ENCODE measurements at regions of chr1 and their contacts with region 1.

Region 1: GRCh38 chr1:117534995-117535467 is 70.8 kb upstream of the TENT5C start:
- DNase-seq: peak; percentile 47
- ATAC-seq: peak; percentile 86
- H3K4me3 Mint-ChIP-seq: no peak overlapping the region
- H3K27ac Mint-ChIP-seq: no peak overlapping the region
- H3K4me1 Mint-ChIP-seq: peaks cover under 1% of the 10 kb centered on the region
- H3K27me3 Mint-ChIP-seq: no peaks in the 10 kb centered on the region

Region 2: GRCh38 chr1:117436513-117436912 is 98.5 kb before region 1 on chr1:
- CTCF ChIA-PET with region 1: no interaction called
- POLR2A ChIA-PET with region 1: no interaction called
- DNase-seq: no peak
- ATAC-seq: no peak
- H3K4me3 Mint-ChIP-seq: no peak overlapping the region
- H3K27ac Mint-ChIP-seq: no peak overlapping the region
- H3K4me1 Mint-ChIP-seq: no peaks in the 10 kb centered on the region
- H3K27me3 Mint-ChIP-seq: no peaks in the 10 kb centered on the region

Region 3: GRCh38 chr1:117501281-117501680 is 33.8 kb before region 1 on chr1:
- CTCF ChIA-PET with region 1: interaction called, 29 read pairs
- POLR2A ChIA-PET with region 1: no interaction called
- DNase-seq: no peak
- ATAC-seq: no peak
- H3K4me3 Mint-ChIP-seq: no peak overlapping the region
- H3K27ac Mint-ChIP-seq: no peak overlapping the region
- H3K4me1 Mint-ChIP-seq: no peaks in the 10 kb centered on the region
- H3K27me3 Mint-ChIP-seq: no peaks in the 10 kb centered on the region

Region 4: GRCh38 chr1:117582451-117582850 is 47.4 kb after region 1 on chr1:
- CTCF ChIA-PET with region 1: interaction called, 19 read pairs
- POLR2A ChIA-PET with region 1: no interaction called
- DNase-seq: no peak
- ATAC-seq: no peak
- H3K4me3 Mint-ChIP-seq: no peak overlapping the region
- H3K27ac Mint-ChIP-seq: no peak overlapping the region
- H3K4me1 Mint-ChIP-seq: no peaks in the 10 kb centered on the region
- H3K27me3 Mint-ChIP-seq: no peaks in the 10 kb centered on the region

Region 5: DNA sequence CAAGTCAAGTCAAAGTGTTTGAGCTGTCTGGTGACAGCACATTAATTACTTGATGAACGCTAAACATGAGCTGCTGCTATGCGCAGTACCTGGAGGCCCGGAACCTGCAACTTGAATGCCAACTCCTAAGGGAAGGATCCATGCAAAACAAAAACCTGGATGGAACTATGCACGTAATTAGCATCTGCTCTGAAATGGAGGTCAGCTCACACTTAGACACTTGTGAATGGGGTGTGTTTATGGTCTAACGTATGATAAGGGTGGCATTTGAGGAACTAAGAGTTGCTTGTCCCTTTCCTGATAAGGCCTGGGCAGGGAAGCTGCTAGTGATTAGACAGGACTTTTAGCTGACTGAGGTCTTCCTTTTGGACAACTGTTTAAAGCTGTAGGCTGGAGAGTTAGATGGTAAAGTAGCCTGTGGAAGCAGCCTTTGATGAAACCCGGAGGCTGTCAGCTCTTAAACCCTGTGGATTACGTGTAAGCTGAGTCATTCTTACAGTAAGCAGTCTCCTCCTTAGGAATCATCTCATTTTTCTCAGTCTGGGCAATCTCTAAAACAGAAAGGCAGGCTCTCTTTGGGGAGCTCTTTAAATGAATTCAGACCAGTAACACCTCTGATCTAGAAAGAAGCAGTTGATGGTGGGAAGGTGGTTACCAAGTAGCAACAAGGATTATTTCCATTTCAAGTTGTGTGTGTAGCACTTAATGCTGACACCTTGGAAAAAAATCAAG is 77.7 kb after region 1 on chr1:
- CTCF ChIA-PET with region 1: interaction called, 29 read pairs
- POLR2A ChIA-PET with region 1: no interaction called
- DNase-seq: no peak
- ATAC-seq: peak; percentile 7
- H3K4me3 Mint-ChIP-seq: no peak overlapping the region
- H3K27ac Mint-ChIP-seq: no peak overlapping the region
- H3K4me1 Mint-ChIP-seq: peaks cover 86% of the 10 kb centered on the region
- H3K27me3 Mint-ChIP-seq: no peaks in the 10 kb centered on the region

Region 6: GRCh38 chr1:117654493-117655219 is 119.6 kb after region 1 on chr1:
- CTCF ChIA-PET with region 1: interaction called, 65 read pairs
- POLR2A ChIA-PET with region 1: no interaction called
- DNase-seq: no peak
- ATAC-seq: peak; percentile 7
- H3K4me3 Mint-ChIP-seq: peak overlapping the region; percentile 25
- H3K27ac Mint-ChIP-seq: peak overlapping the region; percentile 86
- H3K4me1 Mint-ChIP-seq: peaks cover 76% of the 10 kb centered on the region
- H3K27me3 Mint-ChIP-seq: peaks cover 22% of the 10 kb centered on the region

Region 7: GRCh38 chr1:117683571-117684285 is 148.7 kb after region 1 on chr1:
- CTCF ChIA-PET with region 1: interaction called, 31 read pairs
- POLR2A ChIA-PET with region 1: no interaction called
- DNase-seq: no peak
- ATAC-seq: no peak
- H3K4me3 Mint-ChIP-seq: no peak overlapping the region
- H3K27ac Mint-ChIP-seq: no peak overlapping the region
- H3K4me1 Mint-ChIP-seq: peaks cover 7% of the 10 kb centered on the region
- H3K27me3 Mint-ChIP-seq: peaks cover 8% of the 10 kb centered on the region

Region 8: DNA sequence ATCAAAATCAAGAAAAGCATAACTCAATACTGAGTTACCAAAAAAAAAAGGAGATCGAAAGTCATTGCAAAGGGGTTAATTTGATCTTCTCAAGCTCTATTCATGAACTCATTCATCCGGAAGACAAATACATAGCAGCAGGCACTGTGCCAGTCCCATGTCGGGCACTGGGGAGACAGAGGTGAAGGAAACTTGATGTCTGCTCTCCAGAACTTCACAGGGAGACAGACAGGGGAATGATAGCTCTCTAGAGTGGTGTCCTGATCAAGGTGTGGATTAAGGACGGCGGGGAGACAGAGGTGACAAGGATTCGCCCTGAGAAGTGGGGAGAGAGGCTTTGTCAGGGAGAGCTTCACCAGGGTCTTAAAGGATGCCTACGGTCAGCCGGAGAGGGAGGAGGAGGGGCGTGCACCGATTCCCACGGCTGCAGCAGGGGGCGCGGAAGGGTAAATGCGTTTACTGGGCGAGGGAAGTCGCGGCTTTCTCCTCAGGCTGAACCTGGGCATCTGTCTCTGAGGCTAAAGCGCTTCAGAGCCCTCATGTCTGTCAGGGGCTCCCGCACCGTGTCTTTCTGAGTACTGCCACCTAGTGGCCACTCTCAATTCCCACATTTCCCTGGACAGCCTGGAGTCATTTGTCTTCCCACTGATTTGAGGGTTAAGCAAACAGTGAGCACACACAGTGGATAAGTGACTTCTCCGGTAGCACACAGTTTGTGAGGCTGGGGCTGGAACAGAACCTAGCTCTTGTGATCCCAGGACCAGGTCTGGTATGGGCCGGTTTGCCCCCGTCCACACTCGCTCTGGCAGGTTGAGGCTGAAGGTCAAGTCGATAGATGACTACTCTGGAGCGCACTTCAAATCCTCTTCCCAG is 223.6 kb after region 1 on chr1:
- CTCF ChIA-PET with region 1: interaction called, 320 read pairs
- POLR2A ChIA-PET with region 1: interaction called, 4 read pairs
- DNase-seq: peak; percentile 79
- ATAC-seq: peak; percentile 96
- H3K4me3 Mint-ChIP-seq: peak overlapping the region; percentile 67
- H3K27ac Mint-ChIP-seq: peak overlapping the region; percentile 1
- H3K4me1 Mint-ChIP-seq: peaks cover 15% of the 10 kb centered on the region
- H3K27me3 Mint-ChIP-seq: peaks cover 34% of the 10 kb centered on the region

Measured in activated CD8-positive, alpha-beta T cell treated with anti-CD3 and anti-CD28 coated beads, Interleukin-2, amount 10 ng/mL, durations not matched to agents 7 days and 5 days (primary cell).